Esophagus muscularis mucosa (tissue), 4 donors: ENCODE measurements at regions of chr14 and their contacts with region 1.

Region 1: GRCh38 chr14:24734878-24735500 is 101.0 kb upstream of the GZMB start:
- DNase-seq: no peak
- H3K4me3 ChIP-seq: no peak overlapping the region
- H3K27ac ChIP-seq: no peak overlapping the region
- H3K4me1 ChIP-seq: peaks cover 0 to 11% (median 8%) of the 10 kb centered on the region in 4 donors
- H3K27me3 ChIP-seq: no peaks in the 10 kb centered on the region
- CTCF ChIP-seq: peak; percentile 76 to 85 (median 79)
- EP300 ChIP-seq: no peak
- POLR2A ChIP-seq: no peak

Region 2: GRCh38 chr14:24695265-24696241 is 39.4 kb before region 1 on chr14:
- intact Hi-C with region 1: no loop called
- DNase-seq: peak; percentile 62
- H3K4me3 ChIP-seq: no peak overlapping the region
- H3K27ac ChIP-seq: no peak overlapping the region
- H3K4me1 ChIP-seq: peaks cover 0 to 15% (median 4%) of the 10 kb centered on the region in 4 donors
- H3K27me3 ChIP-seq: no peaks in the 10 kb centered on the region
- CTCF ChIP-seq: no peak
- EP300 ChIP-seq: no peak
- POLR2A ChIP-seq: no peak

Region 3: DNA sequence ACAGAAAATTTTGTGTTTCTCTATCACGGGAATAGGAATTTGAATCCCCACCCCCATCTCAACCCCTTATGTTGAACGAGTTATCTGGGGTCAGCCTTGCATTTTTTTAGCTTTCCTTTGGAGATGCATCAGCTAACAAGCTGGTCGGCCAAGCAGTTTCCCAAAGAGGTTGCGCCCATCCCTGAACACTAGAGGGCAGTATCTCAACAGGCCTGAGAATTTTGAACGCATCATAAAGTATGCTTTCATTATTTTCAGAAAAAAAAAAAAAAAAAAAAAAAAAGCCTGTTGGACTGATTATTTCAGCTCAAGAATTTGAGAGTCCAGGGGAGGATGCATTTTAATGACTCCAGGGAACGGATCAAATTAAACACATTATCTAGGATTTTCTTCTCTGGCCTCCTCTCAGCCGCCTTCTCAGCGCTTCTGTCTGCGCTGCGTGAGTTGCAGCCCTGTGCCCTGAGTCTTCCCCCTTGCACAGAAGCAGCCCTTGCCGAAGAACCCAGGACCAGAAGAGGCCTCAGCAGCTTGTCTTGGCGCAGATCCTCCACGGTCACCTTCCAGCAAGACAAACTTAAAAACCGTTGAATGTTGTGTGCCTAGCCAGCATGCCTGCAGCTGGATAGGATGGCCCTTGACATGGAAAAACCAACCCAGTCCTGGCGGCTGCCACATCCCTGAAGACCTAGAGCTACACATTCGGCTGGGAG is 24.4 kb before region 1 on chr14:
- intact Hi-C with region 1: loop called (anchors 2 kb)
- DNase-seq: peak; percentile 90
- H3K4me3 ChIP-seq: peak overlapping the region in 3 of 4 donors; percentile 11 to 35 (median 17)
- H3K27ac ChIP-seq: no peak overlapping the region
- H3K4me1 ChIP-seq: peaks cover 0 to 6% (median 0%) of the 10 kb centered on the region in 4 donors
- H3K27me3 ChIP-seq: no peaks in the 10 kb centered on the region
- CTCF ChIP-seq: peak; percentile 66 to 84 (median 73)
- EP300 ChIP-seq: no peak
- POLR2A ChIP-seq: no peak

Region 4: GRCh38 chr14:24952851-24953666 is 218.1 kb after region 1 on chr14:
- intact Hi-C with region 1: no loop called
- DNase-seq: no peak
- H3K4me3 ChIP-seq: no peak overlapping the region
- H3K27ac ChIP-seq: no peak overlapping the region
- H3K4me1 ChIP-seq: peaks cover 28 to 59% (median 47%) of the 10 kb centered on the region in 4 donors
- H3K27me3 ChIP-seq: no peaks in the 10 kb centered on the region
- CTCF ChIP-seq: peak in 1 of 3 experiments; percentile 19
- EP300 ChIP-seq: no peak
- POLR2A ChIP-seq: no peak

Region 5: GRCh38 chr14:24971255-24971654 is 236.3 kb after region 1 on chr14:
- intact Hi-C with region 1: no loop called
- DNase-seq: no peak
- H3K4me3 ChIP-seq: no peak overlapping the region
- H3K27ac ChIP-seq: peak overlapping the region; percentile 41 to 62 (median 52)
- H3K4me1 ChIP-seq: peaks cover 51 to 97% (median 91%) of the 10 kb centered on the region in 4 donors
- H3K27me3 ChIP-seq: no peaks in the 10 kb centered on the region
- CTCF ChIP-seq: no peak
- EP300 ChIP-seq: no peak
- POLR2A ChIP-seq: no peak

Region 6: DNA sequence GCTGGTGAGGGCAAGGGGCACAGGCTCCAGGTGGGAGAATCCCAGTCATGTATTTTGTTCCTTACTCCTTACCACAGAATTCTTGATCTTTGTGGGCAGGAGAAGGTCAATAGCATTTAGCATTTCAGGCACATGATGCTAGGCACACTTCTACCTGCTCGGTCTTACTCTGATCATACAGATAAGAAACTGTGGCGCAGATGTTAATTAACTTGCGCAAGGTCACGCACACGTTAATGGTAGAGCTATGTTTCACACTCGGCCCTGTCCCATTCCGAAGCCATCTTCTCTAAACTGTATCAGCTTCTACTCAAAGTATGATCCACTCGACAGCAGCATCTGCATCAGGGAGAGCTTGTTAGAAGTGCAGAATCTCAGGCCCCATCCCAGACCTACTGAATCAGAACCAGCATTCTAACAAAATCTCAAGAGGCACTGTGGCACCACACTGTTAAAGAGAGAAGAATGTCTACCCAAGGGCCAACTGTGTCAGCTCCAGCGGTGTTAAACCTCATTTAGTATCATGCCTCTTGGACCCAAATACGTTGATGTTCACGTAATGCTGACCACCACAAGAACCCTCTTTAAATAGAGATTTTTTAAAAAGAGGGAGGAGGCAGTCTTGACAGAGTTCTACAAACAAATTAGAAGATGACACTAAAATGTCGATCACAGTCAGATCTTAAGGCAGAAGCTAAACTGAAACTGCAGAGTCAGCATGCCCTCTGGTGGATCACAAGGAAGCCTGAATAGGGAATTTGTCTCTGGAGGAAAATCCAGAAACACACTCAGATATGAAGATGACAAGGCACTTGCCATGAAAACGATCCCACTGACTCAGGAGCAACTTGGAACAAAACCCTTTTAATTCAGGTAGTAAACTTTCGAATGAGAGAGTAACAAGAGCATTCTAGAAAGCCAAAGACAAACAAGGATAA is 307.6 kb after region 1 on chr14:
- intact Hi-C with region 1: loop called (anchors 5 kb)
- DNase-seq: no peak
- H3K4me3 ChIP-seq: peak overlapping the region in 1 of 4 donors; percentile 18
- H3K27ac ChIP-seq: peak overlapping the region in 1 of 4 donors; percentile 25
- H3K4me1 ChIP-seq: peaks cover 62 to 78% (median 68%) of the 10 kb centered on the region in 4 donors
- H3K27me3 ChIP-seq: no peaks in the 10 kb centered on the region
- CTCF ChIP-seq: peak; percentile 50 to 56 (median 52)
- EP300 ChIP-seq: no peak
- POLR2A ChIP-seq: no peak

Region 7: DNA sequence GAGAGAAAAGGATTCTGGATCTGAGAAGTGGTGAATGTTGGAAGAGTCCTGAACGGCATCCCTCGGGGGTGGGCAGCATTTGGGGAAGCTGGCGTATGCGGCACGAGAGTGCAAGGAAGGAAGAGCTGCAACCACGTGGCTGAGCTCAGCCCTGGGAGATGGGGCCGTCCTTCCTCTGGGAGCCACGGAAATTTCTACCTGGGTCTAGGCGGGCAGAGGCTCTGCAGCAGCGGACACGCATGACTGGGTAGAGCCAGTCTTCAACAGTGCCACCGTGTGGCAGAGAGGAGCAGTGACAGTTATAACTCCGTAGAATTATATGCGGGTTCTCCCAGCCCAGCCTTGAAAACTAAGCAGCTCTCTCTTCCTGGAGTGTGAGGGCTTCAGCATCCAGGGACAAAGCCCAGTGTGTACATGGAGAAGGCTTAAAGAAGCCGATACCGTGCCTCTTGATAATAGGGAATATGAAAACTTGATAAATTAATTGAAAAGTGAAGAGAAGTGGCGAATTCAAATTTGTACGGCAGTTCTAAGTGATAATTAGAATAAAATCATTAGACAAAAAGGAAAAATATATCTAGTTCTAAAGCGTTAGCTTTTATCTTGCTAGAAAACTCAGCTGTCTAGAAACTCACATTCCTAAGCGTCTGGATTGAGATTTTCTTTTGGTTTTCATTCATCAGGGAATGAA is 397.9 kb after region 1 on chr14:
- intact Hi-C with region 1: loop called (anchors 2 kb)
- DNase-seq: no peak
- H3K4me3 ChIP-seq: peak overlapping the region in 1 of 4 donors; percentile 23
- H3K27ac ChIP-seq: no peak overlapping the region
- H3K4me1 ChIP-seq: peaks cover 7 to 10% (median 8%) of the 10 kb centered on the region in 4 donors
- H3K27me3 ChIP-seq: peaks cover 0 to 22% (median 0%) of the 10 kb centered on the region in 4 donors
- CTCF ChIP-seq: peak; percentile 85 to 92 (median 90)
- EP300 ChIP-seq: no peak
- POLR2A ChIP-seq: no peak

Region 8: GRCh38 chr14:25150934-25151790 is 416.2 kb after region 1 on chr14:
- intact Hi-C with region 1: loop called (anchors 5 kb)
- DNase-seq: no peak
- H3K4me3 ChIP-seq: no peak overlapping the region
- H3K27ac ChIP-seq: no peak overlapping the region
- H3K4me1 ChIP-seq: no peaks in the 10 kb centered on the region
- H3K27me3 ChIP-seq: no peaks in the 10 kb centered on the region
- CTCF ChIP-seq: peak; percentile 77 to 85 (median 84)
- EP300 ChIP-seq: no peak
- POLR2A ChIP-seq: no peak